PC-9 (cell line): ENCODE measurements at regions of chr2 and their contacts with region 1.

Region 1: GRCh38 chr2:149597668-149598326 is 10.2 kb upstream of the MMADHC start:
- DNase-seq: peak; percentile 50 to 65
- H3K4me3 ChIP-seq: no peak overlapping the region
- H3K27ac ChIP-seq: no peak overlapping the region
- H3K4me1 ChIP-seq: peaks cover 6% of the 10 kb centered on the region; the same call in 1 of the 2 replicates
- H3K27me3 ChIP-seq: no peaks in the 10 kb centered on the region
- CTCF ChIP-seq: peak; percentile 70

Region 2: GRCh38 chr2:149715005-149715592 is 117.3 kb after region 1 on chr2:
- CTCF ChIA-PET with region 1: no interaction called
- POLR2A ChIA-PET with region 1: no interaction called
- intact Hi-C with region 1: loop called (anchors 2 kb)
- DNase-seq: peak in 1 of 2 experiments; percentile 10
- H3K4me3 ChIP-seq: no peak overlapping the region
- H3K27ac ChIP-seq: no peak overlapping the region
- H3K4me1 ChIP-seq: no peaks in the 10 kb centered on the region
- H3K27me3 ChIP-seq: no peaks in the 10 kb centered on the region
- CTCF ChIP-seq: peak; percentile 47

Region 3: DNA sequence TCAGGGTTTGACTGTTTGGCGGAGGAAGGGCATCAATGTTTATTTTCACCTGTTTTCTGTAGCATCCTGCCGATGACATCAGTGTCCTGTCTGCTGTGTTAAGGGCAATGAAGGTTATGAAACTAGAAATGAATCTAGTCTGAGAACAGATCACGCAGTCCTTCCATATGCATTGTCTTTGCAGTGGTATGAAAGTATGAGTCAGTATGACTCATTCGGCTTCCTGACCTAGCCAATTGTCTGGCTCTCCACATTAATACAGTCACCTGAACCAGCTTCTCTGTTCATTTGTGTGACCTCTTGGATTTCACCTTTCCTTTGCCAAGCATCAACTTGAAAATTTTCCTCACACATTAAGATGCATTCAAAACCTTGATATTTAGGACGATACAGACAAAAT is 535.8 kb after region 1 on chr2:
- CTCF ChIA-PET with region 1: no interaction called
- POLR2A ChIA-PET with region 1: no interaction called
- intact Hi-C with region 1: loop called (anchors 1 kb)
- DNase-seq: peak; percentile 49 to 81
- H3K4me3 ChIP-seq: no peak overlapping the region
- H3K27ac ChIP-seq: peak overlapping the region; percentile 74
- H3K4me1 ChIP-seq: peaks cover 5% of the 10 kb centered on the region; the same call in 1 of the 2 replicates
- H3K27me3 ChIP-seq: no peaks in the 10 kb centered on the region
- CTCF ChIP-seq: no peak

Region 4: GRCh38 chr2:150487537-150488429 is 890.0 kb after region 1 on chr2 and contains the start of gene RND3:
- CTCF ChIA-PET with region 1: interaction called, 4 read pairs
- POLR2A ChIA-PET with region 1: no interaction called
- intact Hi-C with region 1: loop called (anchors 1 kb)
- DNase-seq: peak; percentile 90 to 96
- H3K4me3 ChIP-seq: peak within 1 kb of the TSS; percentile 93
- H3K27ac ChIP-seq: peak within 1 kb of the TSS; percentile 92
- H3K4me1 ChIP-seq: peaks cover 16% of the 10 kb centered on the region
- H3K27me3 ChIP-seq: no peaks in the 10 kb centered on the region
- CTCF ChIP-seq: peak; percentile 87
- total RNA-seq, gene RND3: 72.9 and 99.1 TPM in 2 replicates

Region 5: GRCh38 chr2:150610671-150611279 is 1013.0 kb after region 1 on chr2:
- CTCF ChIA-PET with region 1: no interaction called
- POLR2A ChIA-PET with region 1: no interaction called
- intact Hi-C with region 1: loop called (anchors 1 kb)
- DNase-seq: peak; percentile 35 to 56
- H3K4me3 ChIP-seq: no peak overlapping the region
- H3K27ac ChIP-seq: no peak overlapping the region
- H3K4me1 ChIP-seq: no peaks in the 10 kb centered on the region
- H3K27me3 ChIP-seq: no peaks in the 10 kb centered on the region
- CTCF ChIP-seq: peak; percentile 66

Region 6: GRCh38 chr2:151051574-151052220 is 1453.9 kb after region 1 on chr2:
- CTCF ChIA-PET with region 1: no interaction called
- POLR2A ChIA-PET with region 1: no interaction called
- intact Hi-C with region 1: loop called (anchors 2 kb)
- DNase-seq: peak in 1 of 2 experiments; percentile 12
- H3K4me3 ChIP-seq: no peak overlapping the region
- H3K27ac ChIP-seq: no peak overlapping the region
- H3K4me1 ChIP-seq: peaks cover 15% of the 10 kb centered on the region; the same call in 1 of the 2 replicates
- H3K27me3 ChIP-seq: no peaks in the 10 kb centered on the region
- CTCF ChIP-seq: peak; percentile 63

Region 7: GRCh38 chr2:151238527-151239487 is 1641.0 kb after region 1 on chr2:
- CTCF ChIA-PET with region 1: interaction called, 4 read pairs
- POLR2A ChIA-PET with region 1: no interaction called
- intact Hi-C with region 1: loop called (anchors 1 kb)
- DNase-seq: peak; percentile 43 to 59
- H3K4me3 ChIP-seq: no peak overlapping the region
- H3K27ac ChIP-seq: no peak overlapping the region
- H3K4me1 ChIP-seq: 0 out of 2 replicates have a peak, but pooled peaks cover 4% of the 10 kb centered on the region
- H3K27me3 ChIP-seq: no peaks in the 10 kb centered on the region
- CTCF ChIP-seq: peak; percentile 89